ENCODE measurements at regions of chr3 and their contacts with region 1.

Region 1: DNA sequence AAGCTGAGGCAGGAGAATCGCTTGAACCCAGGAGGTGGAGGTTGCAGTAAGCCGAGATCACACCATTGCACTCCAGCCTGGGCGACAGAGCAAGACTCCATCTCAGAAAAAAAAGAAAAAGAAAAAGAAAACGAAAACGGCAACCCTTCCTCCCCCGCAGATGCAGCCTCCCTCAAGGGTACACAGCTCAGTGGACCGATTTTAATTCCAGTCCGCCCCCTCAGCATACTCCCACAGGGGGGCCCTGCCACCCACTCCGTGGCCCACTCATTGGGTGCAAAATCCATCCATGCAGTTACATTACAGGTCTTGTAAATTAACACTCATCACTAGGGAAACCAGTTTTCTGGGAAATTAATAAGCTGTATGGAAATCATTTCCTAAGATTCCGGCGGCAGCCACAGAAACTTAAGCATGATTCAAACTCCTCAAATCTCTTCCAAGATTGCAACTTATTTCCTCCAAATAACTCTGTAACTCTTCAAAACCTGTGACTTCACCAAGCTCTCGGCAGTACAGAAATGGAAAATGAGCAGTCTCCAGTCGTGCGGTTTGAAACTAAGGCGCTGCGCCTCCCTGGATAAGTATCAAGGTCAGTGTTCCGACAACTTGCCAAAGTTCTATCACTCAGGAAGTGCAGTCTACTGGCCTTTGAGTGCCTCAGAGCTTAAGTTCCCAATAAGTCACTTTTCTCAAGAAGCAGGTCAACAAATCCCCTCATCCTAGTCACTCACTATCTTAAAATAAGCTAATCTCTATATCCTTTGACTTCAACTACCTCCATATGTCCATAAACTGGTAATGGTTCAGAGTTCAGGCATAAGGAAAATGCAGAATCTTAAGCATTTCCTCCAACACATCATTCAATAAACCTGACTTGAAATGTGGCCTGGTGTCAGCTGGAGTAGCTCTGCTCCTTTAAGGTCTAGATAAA is 24.7 kb upstream of the KLHL6 start:
- DNase-seq: no peak
- ATAC-seq: no peak
- H3K4me3 Mint-ChIP-seq: no peak overlapping the region
- H3K27ac Mint-ChIP-seq: no peak overlapping the region
- H3K4me1 Mint-ChIP-seq: peaks cover 31% of the 10 kb centered on the region
- H3K27me3 Mint-ChIP-seq: peaks cover 3% of the 10 kb centered on the region; the same call in 1 of the 2 replicates
- CTCF ChIP-seq: no peak

Region 2: DNA sequence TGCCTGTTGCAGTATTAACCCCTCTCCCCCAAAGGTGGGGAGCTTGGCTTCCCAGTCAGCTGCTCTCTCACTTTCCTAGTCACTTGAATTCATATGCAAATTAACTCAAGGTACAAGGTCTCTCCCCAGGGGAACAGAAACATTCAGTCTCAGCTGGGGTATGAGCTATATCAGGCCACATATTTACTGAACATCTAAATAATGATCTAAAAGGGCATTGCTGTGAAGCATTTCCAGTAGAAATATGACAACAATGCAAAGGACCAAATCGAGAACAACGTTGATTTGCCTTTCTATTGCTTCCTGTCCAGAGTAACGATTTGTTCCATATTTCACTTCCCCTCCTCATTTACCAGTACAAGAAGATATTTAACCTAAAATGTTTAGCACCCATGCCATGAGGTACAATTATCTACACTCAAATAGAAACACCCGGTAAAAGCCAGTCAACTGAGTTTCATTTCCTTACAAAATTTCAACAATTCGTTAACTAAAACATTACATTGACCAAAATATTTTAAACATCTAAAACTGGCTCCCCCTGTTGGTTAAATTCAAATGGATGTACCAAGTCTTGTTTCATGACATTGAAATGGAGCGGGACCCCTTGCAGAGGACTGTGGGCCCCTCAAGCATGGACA is 11.8 kb after region 1 on chr3:
- CTCF ChIA-PET with region 1: interaction called, 10 read pairs
- POLR2A ChIA-PET with region 1: interaction called, 4 read pairs
- DNase-seq: no peak
- ATAC-seq: peak; percentile 84
- H3K4me3 Mint-ChIP-seq: peak overlapping the region; percentile 43
- H3K27ac Mint-ChIP-seq: no peak overlapping the region
- H3K4me1 Mint-ChIP-seq: peaks cover 21% of the 10 kb centered on the region
- H3K27me3 Mint-ChIP-seq: peaks cover 3% of the 10 kb centered on the region; the same call in 1 of the 2 replicates
- CTCF ChIP-seq: no peak

Region 3: GRCh38 chr3:183629546-183630301 is 49.5 kb after region 1 on chr3:
- CTCF ChIA-PET with region 1: no interaction called
- POLR2A ChIA-PET with region 1: no interaction called
- DNase-seq: no peak
- ATAC-seq: peak; percentile 82
- H3K4me3 Mint-ChIP-seq: no peak overlapping the region
- H3K27ac Mint-ChIP-seq: no peak overlapping the region
- H3K4me1 Mint-ChIP-seq: no peaks in the 10 kb centered on the region
- H3K27me3 Mint-ChIP-seq: peaks cover 4% of the 10 kb centered on the region
- CTCF ChIP-seq: no peak

Measured in WTC11 (cell line).